ENCODE measurements at regions of chr16 and their contacts with region 1.

Region 1: GRCh38 chr16:2867987-2868789 is 10.2 kb upstream of the PRSS22 start:
- DNase-seq: peak; percentile 93
- H3K4me3 Mint-ChIP-seq: peak overlapping the region; percentile 76
- H3K27ac Mint-ChIP-seq: peak overlapping the region; percentile 74
- H3K4me1 Mint-ChIP-seq: peaks cover 23% of the 10 kb centered on the region
- H3K27me3 Mint-ChIP-seq: peaks cover 6% of the 10 kb centered on the region

Region 2: GRCh38 chr16:2838928-2839327 is 29.3 kb before region 1 on chr16:
- CTCF ChIA-PET with region 1: interaction called, 18 read pairs
- POLR2A ChIA-PET with region 1: no interaction called
- DNase-seq: peak; percentile 54
- H3K4me3 Mint-ChIP-seq: no peak overlapping the region
- H3K27ac Mint-ChIP-seq: no peak overlapping the region
- H3K4me1 Mint-ChIP-seq: peaks cover 21% of the 10 kb centered on the region
- H3K27me3 Mint-ChIP-seq: peaks cover 3% of the 10 kb centered on the region

Region 3: GRCh38 chr16:2854700-2855309 is 13.4 kb before region 1 on chr16:
- CTCF ChIA-PET with region 1: interaction called, 13 read pairs
- POLR2A ChIA-PET with region 1: no interaction called
- DNase-seq: no peak
- H3K4me3 Mint-ChIP-seq: no peak overlapping the region
- H3K27ac Mint-ChIP-seq: no peak overlapping the region
- H3K4me1 Mint-ChIP-seq: peaks cover 10% of the 10 kb centered on the region
- H3K27me3 Mint-ChIP-seq: peaks cover 7% of the 10 kb centered on the region

Region 4: GRCh38 chr16:2883027-2883851 is 15.1 kb after region 1 on chr16 and contains the start of gene FLYWCH2:
- CTCF ChIA-PET with region 1: interaction called, 18 read pairs
- POLR2A ChIA-PET with region 1: no interaction called
- DNase-seq: peak; percentile 99
- H3K4me3 Mint-ChIP-seq: peak within 1 kb of the TSS; percentile 80
- H3K27ac Mint-ChIP-seq: peak within 1 kb of the TSS; percentile 93
- H3K4me1 Mint-ChIP-seq: peaks cover 14% of the 10 kb centered on the region
- H3K27me3 Mint-ChIP-seq: peaks cover 3% of the 10 kb centered on the region
- total RNA-seq, gene FLYWCH2: 16.8 to 21.0 TPM

Region 5: GRCh38 chr16:2911580-2912329 is 43.6 kb after region 1 on chr16 and contains the start of gene FLYWCH1:
- CTCF ChIA-PET with region 1: interaction called, 10 read pairs
- POLR2A ChIA-PET with region 1: no interaction called
- DNase-seq: peak; percentile 99
- H3K4me3 Mint-ChIP-seq: peak within 1 kb of the TSS; percentile 88
- H3K27ac Mint-ChIP-seq: peak within 1 kb of the TSS; percentile 89
- H3K4me1 Mint-ChIP-seq: peaks cover 30% of the 10 kb centered on the region
- H3K27me3 Mint-ChIP-seq: no peaks in the 10 kb centered on the region
- total RNA-seq, gene FLYWCH1: 46.8 to 52.7 TPM

Region 6: DNA sequence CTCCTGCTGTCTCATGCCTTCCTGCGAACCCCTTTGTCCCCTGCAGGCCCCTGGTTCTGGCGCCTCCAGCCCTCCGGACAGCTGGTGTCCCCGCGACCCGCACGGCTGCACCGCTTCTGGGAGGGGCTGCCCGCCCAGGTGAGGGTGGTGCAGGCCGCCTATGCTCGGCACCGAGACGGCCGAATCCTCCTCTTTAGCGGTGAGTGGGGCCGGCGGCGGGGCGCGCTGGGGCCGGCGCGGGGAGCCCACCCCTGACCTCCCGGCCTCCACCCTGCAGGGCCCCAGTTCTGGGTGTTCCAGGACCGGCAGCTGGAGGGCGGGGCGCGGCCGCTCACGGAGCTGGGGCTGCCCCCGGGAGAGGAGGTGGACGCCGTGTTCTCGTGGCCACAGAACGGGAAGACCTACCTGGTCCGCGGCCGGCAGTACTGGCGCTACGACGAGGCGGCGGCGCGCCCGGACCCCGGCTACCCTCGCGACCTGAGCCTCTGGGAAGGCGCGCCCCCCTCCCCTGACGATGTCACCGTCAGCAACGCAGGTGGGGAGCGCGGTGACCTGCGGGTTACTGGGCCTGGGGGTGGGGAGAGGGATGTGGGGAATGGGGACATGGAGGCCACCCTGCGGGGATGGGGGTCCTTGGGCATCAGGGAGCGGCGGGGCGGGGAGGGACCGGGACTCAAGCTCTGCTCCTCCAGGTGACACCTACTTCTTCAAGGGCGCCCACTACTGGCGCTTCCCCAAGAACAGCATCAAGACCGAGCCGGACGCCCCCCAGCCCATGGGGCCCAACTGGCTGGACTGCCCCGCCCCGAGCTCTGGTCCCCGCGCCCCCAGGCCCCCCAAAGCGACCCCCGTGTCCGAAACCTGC is 190.2 kb after region 1 on chr16:
- CTCF ChIA-PET with region 1: no interaction called
- POLR2A ChIA-PET with region 1: no interaction called
- DNase-seq: peak; percentile 64
- H3K4me3 Mint-ChIP-seq: peak overlapping the region; percentile 93
- H3K27ac Mint-ChIP-seq: peak overlapping the region; percentile 91
- H3K4me1 Mint-ChIP-seq: peaks cover 72% of the 10 kb centered on the region
- H3K27me3 Mint-ChIP-seq: no peaks in the 10 kb centered on the region